Dorsolateral prefrontal cortex (tissue), 120 donors: ENCODE measurements at regions of chr4 and their contacts with region 1.

Region 1: DNA sequence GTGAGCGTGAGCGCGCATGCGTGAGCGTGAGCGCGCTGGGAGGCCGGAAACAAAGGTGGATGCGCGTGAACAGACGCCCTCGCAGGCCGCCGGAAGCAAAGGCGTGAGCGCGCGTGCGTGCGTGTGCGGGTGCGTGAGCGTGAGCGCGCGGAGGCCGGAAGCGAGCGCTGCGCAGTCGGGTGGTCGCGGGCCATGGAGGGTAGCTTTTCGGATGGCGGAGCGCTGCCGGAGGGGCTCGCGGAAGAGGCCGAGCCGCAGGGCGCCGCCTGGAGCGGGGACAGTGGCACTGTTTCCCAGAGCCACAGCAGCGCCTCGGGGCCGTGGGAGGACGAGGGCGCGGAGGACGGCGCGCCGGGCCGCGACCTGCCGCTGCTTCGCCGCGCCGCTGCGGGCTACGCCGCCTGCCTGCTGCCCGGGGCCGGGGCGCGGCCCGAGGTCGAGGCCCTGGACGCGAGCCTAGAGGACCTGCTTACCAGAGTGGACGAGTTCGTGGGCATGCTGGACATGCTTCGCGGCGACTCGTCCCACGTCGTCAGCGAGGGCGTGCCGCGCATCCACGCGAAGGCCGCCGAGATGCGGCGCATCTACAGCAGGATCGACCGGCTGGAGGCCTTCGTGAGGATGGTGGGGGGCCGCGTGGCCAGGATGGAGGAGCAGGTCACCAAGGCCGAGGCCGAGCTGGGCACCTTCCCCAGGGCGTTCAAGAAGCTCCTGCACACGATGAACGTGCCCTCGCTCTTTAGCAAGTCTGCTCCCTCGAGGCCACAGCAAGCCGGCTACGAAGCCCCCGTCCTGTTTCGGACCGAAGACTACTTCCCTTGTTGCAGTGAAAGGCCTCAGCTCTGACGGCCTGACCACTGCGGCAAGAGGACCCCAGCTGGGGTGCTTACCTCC is at the start of gene BLOC1S4:
- DNase-seq: peak; percentile 71 to 88 (median 84)
- H3K4me3 ChIP-seq: peak within 1 kb of the TSS; percentile 63 to 96 (median 83)
- H3K27ac ChIP-seq: peak within 1 kb of the TSS; percentile 34 to 99 (median 90)
- H3K27me3 ChIP-seq: no peaks in the 10 kb centered on the region
- CTCF ChIP-seq: peak in 43 of 56 donors; percentile 5 to 59 (median 30)
- total RNA-seq, gene BLOC1S4: 5.0 to 12.2 (median 9.0) TPM

Region 2: DNA sequence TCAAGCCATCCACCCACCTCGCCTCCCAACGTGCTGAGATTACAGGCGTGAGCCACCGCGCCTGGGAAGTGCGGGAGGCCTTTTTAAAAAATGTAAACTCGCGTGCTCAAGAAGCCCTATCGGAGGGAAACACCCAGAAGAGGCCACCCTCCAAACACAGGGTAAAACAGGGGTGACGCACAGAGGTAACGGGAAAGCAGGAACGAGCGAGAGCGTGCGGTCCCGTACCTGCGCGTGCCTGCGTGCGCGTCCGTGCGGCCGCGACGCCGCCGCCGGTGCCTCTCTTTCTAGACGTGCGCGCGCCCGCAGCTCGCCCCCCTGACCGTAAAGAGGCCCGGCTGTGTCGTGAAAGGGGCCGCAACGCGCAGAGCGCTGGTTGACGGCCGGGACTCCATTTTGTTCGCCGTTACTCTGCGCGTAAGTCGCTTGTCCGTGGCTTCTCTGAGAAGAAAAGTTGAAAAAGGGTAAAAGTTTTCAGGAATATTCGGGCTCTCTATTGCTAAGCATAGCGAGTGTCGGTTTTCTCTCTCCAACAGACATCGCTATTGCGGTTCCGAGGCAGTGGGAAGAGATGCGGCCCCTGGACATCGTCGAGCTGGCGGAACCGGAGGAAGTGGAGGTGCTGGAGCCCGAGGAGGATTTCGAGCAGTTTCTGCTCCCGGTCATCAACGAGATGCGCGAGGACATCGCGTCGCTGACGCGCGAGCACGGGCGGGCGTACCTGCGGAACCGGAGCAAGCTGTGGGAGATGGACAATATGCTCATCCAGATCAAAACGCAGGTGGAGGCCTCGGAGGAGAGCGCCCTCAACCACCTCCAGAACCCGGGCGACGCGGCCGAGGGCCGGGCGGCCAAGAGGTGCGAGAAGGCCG is 75.7 kb before region 1 on chr4 and contains the start of gene MRFAP1:
- intact Hi-C with region 1: loop called in 1 of 2 experiments (anchors 2 kb)
- DNase-seq: peak; percentile 88 to 93 (median 93)
- H3K4me3 ChIP-seq: peak within 1 kb of the TSS; percentile 68 to 98 (median 92)
- H3K27ac ChIP-seq: peak within 1 kb of the TSS; percentile 66 to 99 (median 96)
- H3K27me3 ChIP-seq: no peaks in the 10 kb centered on the region
- CTCF ChIP-seq: peak in 25 of 56 donors; percentile 9 to 53 (median 29)
- total RNA-seq, gene MRFAP1: 242 to 474 (median 356) TPM

Region 3: DNA sequence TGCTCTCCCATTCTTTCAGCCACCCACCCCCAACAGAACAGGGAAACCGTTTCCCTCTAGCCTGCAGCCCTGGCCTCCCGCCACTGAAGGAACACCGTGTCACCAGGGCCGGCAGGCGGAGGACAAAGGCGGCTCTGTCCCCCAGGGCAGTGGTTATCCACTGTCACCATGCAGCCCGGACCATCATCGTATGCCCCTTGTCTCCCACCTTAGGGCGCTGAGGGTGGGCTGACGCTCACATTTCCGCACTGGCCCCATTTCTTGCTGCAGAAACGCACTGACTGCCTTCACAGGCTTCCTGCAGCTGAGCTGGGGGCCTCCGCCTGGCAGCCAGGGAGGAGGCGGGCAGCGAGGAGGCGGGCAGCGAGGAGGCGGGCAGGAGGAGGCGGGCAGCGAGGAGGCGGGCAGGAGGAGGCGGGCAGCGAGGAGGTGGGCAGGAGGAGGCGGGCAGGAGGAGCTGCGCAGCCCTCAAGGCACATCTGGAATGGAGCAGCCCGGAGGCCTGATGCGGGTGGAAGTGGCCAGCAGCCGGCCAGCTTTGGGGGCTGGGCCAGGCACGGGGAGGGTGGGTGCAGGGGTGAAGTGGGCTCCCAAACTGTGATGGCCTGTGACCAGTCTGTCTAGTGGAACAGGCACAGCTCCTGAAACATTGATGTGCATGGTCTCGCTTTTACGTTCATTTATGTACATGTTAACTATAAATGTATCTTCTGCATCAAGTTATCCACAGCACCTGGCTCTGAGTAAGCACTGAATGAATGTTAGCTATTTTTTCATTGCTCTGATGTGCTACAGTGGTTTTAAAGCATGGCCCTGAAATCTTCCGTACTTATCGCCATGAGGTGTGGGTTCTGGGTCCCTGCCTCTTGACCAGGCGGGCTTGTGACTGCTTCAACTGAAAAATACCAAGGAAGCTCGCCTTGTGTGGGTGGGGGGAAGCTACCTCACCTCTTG is 45.7 kb after region 1 on chr4:
- intact Hi-C with region 1: loop called in 1 of 2 experiments (anchors 5 kb)
- DNase-seq: peak; percentile 17 to 83 (median 72)
- H3K4me3 ChIP-seq: peak overlapping the region in 40 of 59 donors; percentile 7 to 55 (median 39)
- H3K27ac ChIP-seq: peak overlapping the region in 56 of 59 donors; percentile 2 to 90 (median 78)
- H3K27me3 ChIP-seq: no peaks in the 10 kb centered on the region
- CTCF ChIP-seq: peak in 10 of 56 donors; percentile 12 to 28 (median 17)

Region 4: DNA sequence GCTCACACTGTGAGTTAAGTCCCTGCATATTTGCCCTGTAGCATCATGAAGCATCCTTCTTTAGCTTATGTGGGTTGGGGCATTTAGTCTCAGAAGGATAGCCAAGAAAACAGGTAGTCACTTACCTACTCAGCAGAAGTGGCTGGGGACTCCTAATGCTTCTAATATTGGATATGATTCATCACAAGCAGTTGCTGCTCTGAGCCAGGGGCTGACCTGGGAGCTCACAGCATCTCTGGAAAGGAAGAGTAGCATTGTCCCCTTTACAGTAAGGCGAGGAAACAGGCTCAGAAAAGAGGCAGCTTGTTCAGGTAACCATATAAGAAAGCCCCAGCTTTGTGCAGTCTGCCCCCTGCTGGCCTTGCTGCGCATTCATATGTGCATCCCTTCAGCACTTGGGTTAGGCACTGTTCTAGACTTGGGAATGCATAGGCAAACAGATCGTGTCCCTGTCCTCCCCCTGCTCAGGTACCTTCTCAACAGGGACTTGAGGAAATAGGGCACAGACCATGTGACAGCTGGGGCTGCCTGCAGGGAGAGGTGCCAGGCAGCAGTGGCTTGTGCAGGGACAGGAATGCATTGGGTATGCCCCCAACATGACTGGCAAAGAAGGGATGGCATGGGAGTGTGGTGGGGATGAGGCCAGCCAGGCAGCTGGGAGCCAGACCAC is 157.7 kb after region 1 on chr4:
- intact Hi-C with region 1: loop called (anchors 1 to 5 kb)
- DNase-seq: peak; percentile 61 to 89 (median 77)
- H3K4me3 ChIP-seq: no peak overlapping the region
- H3K27ac ChIP-seq: peak overlapping the region in 55 of 59 donors; percentile 5 to 85 (median 66)
- H3K27me3 ChIP-seq: no peaks in the 10 kb centered on the region
- CTCF ChIP-seq: peak; percentile 65 to 94 (median 86)

Region 5: DNA sequence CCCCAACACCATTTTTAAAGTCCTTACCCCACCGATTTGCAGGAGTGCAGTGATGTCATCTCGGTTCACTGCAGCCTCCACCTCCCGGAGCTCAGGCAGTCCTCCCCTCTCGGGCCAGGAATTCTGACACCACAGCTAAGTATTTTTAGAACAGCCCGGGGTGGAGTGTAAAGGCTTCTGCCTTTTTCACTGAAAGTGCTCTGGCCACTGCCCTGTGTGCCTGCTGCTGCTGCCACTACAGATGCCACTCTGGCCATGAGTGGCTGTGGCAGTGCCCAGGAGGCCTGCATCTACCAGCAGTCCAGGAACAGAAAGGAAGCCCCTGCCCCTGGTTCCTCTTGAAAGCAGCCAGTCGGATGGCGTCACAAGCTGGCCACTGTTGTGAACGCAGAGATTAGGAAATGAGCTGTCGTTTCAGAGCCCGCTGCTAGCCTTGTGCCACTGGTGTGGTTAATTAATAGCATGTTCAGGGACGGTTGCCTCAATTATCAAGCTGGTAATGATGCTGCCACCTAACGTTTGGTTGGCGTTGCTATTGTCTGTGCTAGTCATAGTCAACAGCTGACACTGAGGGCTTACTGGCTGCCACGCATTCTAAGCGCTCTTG is 169.8 kb after region 1 on chr4:
- intact Hi-C with region 1: loop called in 1 of 2 experiments (anchors 2 kb)
- DNase-seq: peak; percentile 42 to 90 (median 70)
- H3K4me3 ChIP-seq: peak overlapping the region in 8 of 59 donors; percentile 4 to 32 (median 13)
- H3K27ac ChIP-seq: peak overlapping the region in 57 of 59 donors; percentile 18 to 85 (median 70)
- H3K27me3 ChIP-seq: no peaks in the 10 kb centered on the region
- CTCF ChIP-seq: peak in 55 of 56 donors; percentile 21 to 79 (median 58)

Region 6: GRCh38 chr4:6974138-6974848 is 258.0 kb after region 1 on chr4:
- intact Hi-C with region 1: loop called in 1 of 2 experiments (anchors 5 kb)
- DNase-seq: peak; percentile 70 to 90 (median 82)
- H3K4me3 ChIP-seq: peak overlapping the region in 3 of 59 donors; percentile 15 to 18 (median 15)
- H3K27ac ChIP-seq: peak overlapping the region in 7 of 59 donors; percentile 6 to 61 (median 23)
- H3K27me3 ChIP-seq: no peaks in the 10 kb centered on the region
- CTCF ChIP-seq: peak; percentile 91 to 99 (median 98)